ENCODE measurements at regions of chrX and their contacts with region 1.

Region 1: DNA sequence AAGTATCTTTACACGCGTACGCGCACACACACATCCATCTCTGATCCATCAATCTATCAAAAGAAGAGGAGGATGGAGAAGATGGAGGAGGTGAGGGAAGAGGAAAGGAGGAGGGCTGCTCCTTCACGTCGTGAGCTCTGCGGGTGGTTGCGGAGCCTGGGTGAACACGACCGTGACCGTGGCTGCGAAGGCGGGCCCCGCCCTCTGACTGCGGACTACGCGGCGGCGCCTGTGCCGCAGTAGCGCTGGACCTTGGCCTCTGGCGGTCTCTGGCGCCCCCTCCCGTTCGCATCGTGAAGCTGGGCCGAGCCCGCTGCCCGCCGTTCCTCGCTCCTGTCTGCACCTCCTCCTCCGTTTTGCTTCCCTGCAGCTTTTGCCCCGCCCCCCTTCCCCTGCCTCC is 37.7 kb upstream of the ARAF start:
- DNase-seq: peak; percentile 46 to 88 (median 76)
- ATAC-seq: peak; percentile 96
- H3K4me3 ChIP-seq: peak overlapping the region; percentile 55
- H3K4me3 Mint-ChIP-seq: peak overlapping the region; percentile 59
- H3K27ac ChIP-seq: no peak overlapping the region
- H3K27ac Mint-ChIP-seq: no peak overlapping the region
- H3K4me1 ChIP-seq: peaks cover 7% of the 10 kb centered on the region
- H3K4me1 Mint-ChIP-seq: no peaks in the 10 kb centered on the region
- H3K27me3 ChIP-seq: no peaks in the 10 kb centered on the region
- H3K27me3 Mint-ChIP-seq: no peaks in the 10 kb centered on the region
- CTCF ChIP-seq: peak; percentile 79

Region 2: DNA sequence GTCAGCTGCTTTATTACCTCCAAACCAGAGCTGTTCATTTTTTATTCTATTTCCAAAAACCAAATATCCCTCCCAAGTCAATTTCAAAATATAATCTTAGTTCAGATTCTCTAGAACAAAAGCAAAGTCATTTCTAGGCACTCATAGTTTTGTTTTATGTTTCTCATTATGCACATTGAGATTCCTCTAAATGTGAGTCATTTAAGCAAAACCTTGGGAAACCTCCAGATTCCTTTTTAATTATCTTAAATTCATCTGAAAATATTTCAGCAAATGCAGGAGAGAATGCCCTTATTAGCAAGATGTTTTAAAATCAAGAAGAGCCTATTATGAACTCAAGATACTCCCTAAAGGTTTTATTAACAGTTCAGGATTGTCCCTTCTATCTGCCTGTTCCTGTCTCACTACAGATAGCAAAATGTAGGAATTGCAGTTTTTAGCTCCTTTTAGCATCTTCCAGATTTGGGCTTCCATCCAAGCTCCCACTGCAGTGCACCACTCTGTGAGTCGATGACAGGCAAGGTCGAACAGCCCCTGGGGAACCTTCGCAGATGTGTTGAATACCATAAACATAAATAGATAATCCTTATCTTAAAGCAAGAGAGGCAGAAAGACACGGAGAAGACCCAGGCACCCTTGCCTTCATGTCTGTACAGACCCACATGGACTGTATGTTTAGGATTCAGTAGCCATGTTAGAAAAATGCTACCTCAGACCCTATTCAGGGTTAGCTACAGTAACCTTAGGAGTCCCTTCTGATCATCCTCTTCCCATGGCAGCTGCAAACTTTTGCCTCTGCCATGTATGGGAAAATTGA is 753.1 kb before region 1 on chrX:
- CTCF ChIA-PET with region 1: no interaction called
- POLR2A ChIA-PET with region 1: no interaction called
- intact Hi-C with region 1: loop called in 1 of 2 experiments (anchors 10 kb)
- DNase-seq: no peak
- ATAC-seq: no peak
- H3K4me3 ChIP-seq: no peak overlapping the region
- H3K4me3 Mint-ChIP-seq: no peak overlapping the region
- H3K27ac ChIP-seq: no peak overlapping the region
- H3K27ac Mint-ChIP-seq: no peak overlapping the region
- H3K4me1 ChIP-seq: no peaks in the 10 kb centered on the region
- H3K4me1 Mint-ChIP-seq: no peaks in the 10 kb centered on the region
- H3K27me3 ChIP-seq: no peaks in the 10 kb centered on the region
- H3K27me3 Mint-ChIP-seq: peaks cover 3% of the 10 kb centered on the region
- CTCF ChIP-seq: no peak

Region 3: GRCh38 chrX:46912098-46912602 is 611.1 kb before region 1 on chrX and contains the start of gene JADE3:
- CTCF ChIA-PET with region 1: no interaction called
- POLR2A ChIA-PET with region 1: no interaction called
- intact Hi-C with region 1: loop called in 1 of 2 experiments (anchors 10 kb)
- DNase-seq: peak in 10 of 14 experiments; percentile 1 to 60 (median 19)
- ATAC-seq: peak; percentile 63
- H3K4me3 ChIP-seq: peak within 1 kb of the TSS; percentile 55
- H3K4me3 Mint-ChIP-seq: peak within 1 kb of the TSS; percentile 83
- H3K27ac ChIP-seq: no peak within 1 kb of the TSS
- H3K27ac Mint-ChIP-seq: no peak within 1 kb of the TSS
- H3K4me1 ChIP-seq: peaks cover 9% of the 10 kb centered on the region
- H3K4me1 Mint-ChIP-seq: peaks cover 11% of the 10 kb centered on the region
- H3K27me3 ChIP-seq: peaks cover 9 to 26% of the 10 kb centered on the region in 2 experiments
- H3K27me3 Mint-ChIP-seq: peaks cover 34% of the 10 kb centered on the region
- CTCF ChIP-seq: no peak
- total RNA-seq, gene JADE3: 0.05 to 0.20 TPM

Region 4: DNA sequence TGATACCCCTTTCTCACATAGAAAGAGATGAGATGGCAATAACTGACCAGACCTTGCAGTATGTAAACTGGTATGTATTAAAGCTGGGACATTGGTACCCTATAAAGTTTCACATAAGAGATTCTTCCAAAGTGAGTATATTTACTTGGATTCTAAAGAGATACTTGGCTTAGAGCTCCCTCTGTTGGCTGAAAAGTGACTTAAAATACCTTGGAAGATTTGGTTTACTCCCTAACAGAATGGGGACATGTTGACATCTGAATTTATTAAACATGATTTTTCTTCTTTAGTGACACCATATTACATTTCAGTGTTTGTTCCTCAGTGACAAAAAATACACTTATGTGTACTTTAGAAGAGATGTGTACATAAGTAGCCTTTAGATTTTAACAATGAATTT is 493.0 kb before region 1 on chrX:
- CTCF ChIA-PET with region 1: no interaction called
- POLR2A ChIA-PET with region 1: no interaction called
- intact Hi-C with region 1: loop called in 1 of 2 experiments (anchors 5 kb)
- DNase-seq: peak in 4 of 14 experiments; percentile 27 to 60 (median 52)
- ATAC-seq: no peak
- H3K4me3 ChIP-seq: no peak overlapping the region
- H3K4me3 Mint-ChIP-seq: no peak overlapping the region
- H3K27ac ChIP-seq: no peak overlapping the region
- H3K27ac Mint-ChIP-seq: no peak overlapping the region
- H3K4me1 ChIP-seq: no peaks in the 10 kb centered on the region
- H3K4me1 Mint-ChIP-seq: no peaks in the 10 kb centered on the region
- H3K27me3 ChIP-seq: no peaks in the 10 kb centered on the region
- H3K27me3 Mint-ChIP-seq: no peaks in the 10 kb centered on the region
- CTCF ChIP-seq: peak; percentile 65

Region 5: DNA sequence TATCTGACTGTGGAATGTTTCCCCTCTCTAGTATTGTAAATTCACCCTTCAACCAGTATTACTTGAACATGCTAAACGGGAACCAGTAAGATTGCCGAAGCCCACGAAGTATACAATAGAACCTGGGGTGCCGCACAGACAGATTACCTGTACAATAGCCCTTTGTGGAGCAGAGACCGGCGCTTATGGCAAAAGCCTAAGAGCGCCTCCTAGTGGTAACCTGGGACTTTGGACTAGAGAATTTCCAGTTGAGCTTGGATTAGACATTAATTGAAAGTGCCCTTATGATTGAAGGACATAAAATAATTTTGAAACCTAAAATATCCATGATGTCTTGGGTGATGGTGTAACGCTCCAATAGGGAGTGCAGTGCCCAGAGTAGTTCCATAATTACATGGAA is 138.8 kb before region 1 on chrX:
- CTCF ChIA-PET with region 1: interaction called, 14 read pairs
- POLR2A ChIA-PET with region 1: no interaction called
- intact Hi-C with region 1: loop called (anchors 2 kb)
- DNase-seq: peak; percentile 51 to 87 (median 63)
- ATAC-seq: peak; percentile 50
- H3K4me3 ChIP-seq: no peak overlapping the region
- H3K4me3 Mint-ChIP-seq: peak overlapping the region; percentile 51
- H3K27ac ChIP-seq: no peak overlapping the region
- H3K27ac Mint-ChIP-seq: peak overlapping the region; percentile 74
- H3K4me1 ChIP-seq: peaks cover 16% of the 10 kb centered on the region
- H3K4me1 Mint-ChIP-seq: peaks cover 29% of the 10 kb centered on the region
- H3K27me3 ChIP-seq: no peaks in the 10 kb centered on the region
- H3K27me3 Mint-ChIP-seq: no peaks in the 10 kb centered on the region
- CTCF ChIP-seq: peak; percentile 70

Region 6: DNA sequence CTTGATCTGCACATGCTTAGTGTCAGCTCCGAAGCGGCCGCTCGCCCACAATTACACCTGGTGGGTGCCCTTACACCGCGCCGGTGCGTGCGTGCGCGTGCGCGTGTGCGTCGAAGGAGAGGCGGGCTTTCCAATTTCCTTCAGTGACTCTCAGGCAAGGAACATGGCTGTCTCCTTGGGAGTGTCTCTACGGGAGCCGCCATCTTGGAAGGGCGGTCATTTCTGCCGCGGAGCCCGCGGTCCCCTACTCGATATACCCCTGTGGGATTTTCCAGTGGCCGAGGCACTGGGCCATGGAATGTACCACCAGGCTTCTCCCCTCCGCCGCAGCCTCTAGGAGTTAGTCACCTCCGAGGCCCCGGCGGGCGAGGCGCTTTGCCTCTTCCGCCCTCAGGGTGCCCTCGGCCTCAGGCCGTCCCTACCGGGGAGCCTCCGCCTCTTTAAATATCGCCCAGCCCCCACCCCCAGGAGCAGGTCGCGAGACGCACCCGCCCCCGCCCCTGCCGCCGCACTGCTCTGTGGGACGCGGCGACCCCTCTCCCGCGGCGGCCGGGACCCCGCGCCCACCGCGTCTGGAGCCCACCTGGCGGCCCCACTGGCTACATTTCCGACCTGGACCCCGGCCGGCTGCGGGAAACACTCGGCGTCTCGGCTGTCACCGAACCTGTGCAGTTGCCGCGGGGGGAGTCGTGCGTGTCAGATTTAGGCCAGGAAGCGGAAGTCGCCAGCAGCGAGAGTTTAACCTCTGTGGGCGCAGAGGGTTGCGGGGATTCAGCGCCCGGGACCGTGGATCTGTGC is 40.6 kb before region 1 on chrX and contains the start of gene ZNF41:
- CTCF ChIA-PET with region 1: interaction called, 5 read pairs
- POLR2A ChIA-PET with region 1: interaction called, 5 read pairs
- intact Hi-C with region 1: loop called in 1 of 2 experiments (anchors 5 kb)
- DNase-seq: peak; percentile 52 to 93 (median 74)
- ATAC-seq: peak; percentile 81
- H3K4me3 ChIP-seq: peak within 1 kb of the TSS; percentile 88
- H3K4me3 Mint-ChIP-seq: peak within 1 kb of the TSS; percentile 96
- H3K27ac ChIP-seq: peak within 1 kb of the TSS; percentile 84
- H3K27ac Mint-ChIP-seq: peak within 1 kb of the TSS; percentile 94
- H3K4me1 ChIP-seq: peaks cover 21% of the 10 kb centered on the region
- H3K4me1 Mint-ChIP-seq: peaks cover 45% of the 10 kb centered on the region
- H3K27me3 ChIP-seq: no peaks in the 10 kb centered on the region
- H3K27me3 Mint-ChIP-seq: no peaks in the 10 kb centered on the region
- CTCF ChIP-seq: no peak
- total RNA-seq, gene ZNF41: 3.1 to 3.9 TPM

Region 7: GRCh38 chrX:47568656-47569295 is 45.5 kb after region 1 on chrX:
- CTCF ChIA-PET with region 1: no interaction called
- POLR2A ChIA-PET with region 1: no interaction called
- intact Hi-C with region 1: no loop called
- DNase-seq: peak in 12 of 14 experiments; percentile 17 to 71 (median 26)
- ATAC-seq: peak; percentile 80
- H3K4me3 ChIP-seq: no peak overlapping the region
- H3K4me3 Mint-ChIP-seq: no peak overlapping the region
- H3K27ac ChIP-seq: no peak overlapping the region
- H3K27ac Mint-ChIP-seq: peak overlapping the region; percentile 73
- H3K4me1 ChIP-seq: peaks cover 20% of the 10 kb centered on the region
- H3K4me1 Mint-ChIP-seq: peaks cover 21% of the 10 kb centered on the region
- H3K27me3 ChIP-seq: no peaks in the 10 kb centered on the region
- H3K27me3 Mint-ChIP-seq: peaks cover 5% of the 10 kb centered on the region
- CTCF ChIP-seq: peak; percentile 37

Region 8: DNA sequence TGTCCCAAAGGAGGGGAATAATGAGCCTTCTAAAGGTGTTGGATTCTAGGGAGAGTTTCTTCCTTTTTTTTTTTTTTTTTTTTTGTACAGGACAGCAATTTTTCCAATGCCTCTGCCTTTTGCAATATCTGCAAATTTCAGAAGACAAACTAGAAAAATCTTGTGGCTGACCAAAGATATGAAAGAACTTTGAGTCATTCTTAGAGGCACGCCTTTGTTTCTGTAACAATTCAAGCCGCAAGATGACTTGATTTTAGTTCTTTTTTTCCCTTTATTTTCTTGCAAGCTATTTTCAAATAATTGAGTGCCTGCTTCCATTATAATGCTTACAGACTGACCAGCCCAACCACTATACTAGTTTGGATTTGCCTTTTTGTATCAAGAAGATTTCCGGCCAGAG is 183.3 kb after region 1 on chrX:
- CTCF ChIA-PET with region 1: no interaction called
- POLR2A ChIA-PET with region 1: no interaction called
- intact Hi-C with region 1: no loop called
- DNase-seq: no peak
- ATAC-seq: no peak
- H3K4me3 ChIP-seq: no peak overlapping the region
- H3K4me3 Mint-ChIP-seq: no peak overlapping the region
- H3K27ac ChIP-seq: no peak overlapping the region
- H3K27ac Mint-ChIP-seq: no peak overlapping the region
- H3K4me1 ChIP-seq: no peaks in the 10 kb centered on the region
- H3K4me1 Mint-ChIP-seq: no peaks in the 10 kb centered on the region
- H3K27me3 ChIP-seq: no peaks in the 10 kb centered on the region
- H3K27me3 Mint-ChIP-seq: peaks cover 4% of the 10 kb centered on the region
- CTCF ChIP-seq: no peak

Region 9: GRCh38 chrX:47751670-47752069 is 228.4 kb after region 1 on chrX:
- CTCF ChIA-PET with region 1: no interaction called
- POLR2A ChIA-PET with region 1: no interaction called
- intact Hi-C with region 1: loop called in 1 of 2 experiments (anchors 10 kb)
- DNase-seq: peak in 11 of 14 experiments; percentile 0 to 36 (median 13)
- ATAC-seq: no peak
- H3K4me3 ChIP-seq: no peak overlapping the region
- H3K4me3 Mint-ChIP-seq: no peak overlapping the region
- H3K27ac ChIP-seq: no peak overlapping the region
- H3K27ac Mint-ChIP-seq: no peak overlapping the region
- H3K4me1 ChIP-seq: no peaks in the 10 kb centered on the region
- H3K4me1 Mint-ChIP-seq: no peaks in the 10 kb centered on the region
- H3K27me3 ChIP-seq: no peaks in the 10 kb centered on the region
- H3K27me3 Mint-ChIP-seq: peaks cover 4% of the 10 kb centered on the region
- CTCF ChIP-seq: no peak